ENCODE measurements at regions of chr17 and their contacts with region 1.

Region 1: DNA sequence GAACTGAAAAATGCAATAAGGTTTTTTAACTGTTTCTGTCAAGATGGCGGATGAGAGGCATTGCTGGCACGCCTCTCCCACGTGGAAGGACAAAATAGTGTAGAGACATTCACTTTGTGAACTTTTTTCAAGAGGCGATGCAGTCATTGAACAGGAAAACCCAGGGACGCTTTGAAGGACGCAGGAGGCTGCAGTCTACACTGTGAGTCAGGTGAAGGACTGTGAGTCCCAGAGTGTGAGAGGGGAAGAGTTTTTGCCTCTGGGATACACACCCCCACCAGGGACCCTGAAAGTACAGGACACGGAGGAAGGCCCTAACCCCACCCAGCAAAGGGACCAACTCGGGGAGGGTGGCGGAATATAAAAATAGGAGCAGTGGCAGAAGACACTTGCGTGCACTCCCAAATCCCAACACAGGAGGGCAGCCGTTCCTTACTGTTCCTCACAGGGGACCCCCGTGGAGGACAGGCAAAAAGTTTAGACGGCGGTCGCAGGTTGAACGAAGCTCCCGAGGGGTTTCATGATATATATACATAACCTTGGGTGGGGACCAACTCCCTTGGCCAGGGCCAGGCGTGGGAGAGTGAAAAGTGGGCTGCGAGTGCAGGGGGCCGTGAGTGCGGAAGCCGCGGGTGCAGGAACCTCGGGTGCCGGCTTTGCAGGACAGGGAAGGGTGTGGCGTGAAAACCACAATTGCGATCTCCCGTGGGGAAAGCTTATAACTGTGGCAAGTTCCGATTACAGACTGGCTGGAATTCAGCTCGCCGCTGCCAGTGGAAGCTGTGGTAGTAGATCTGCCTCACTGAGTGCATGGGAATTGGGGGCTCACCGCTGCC is 82.0 kb upstream of the ALOX12 start:
- DNase-seq: peak; percentile 47 to 77
- ATAC-seq: peak; percentile 66

Region 2: GRCh38 chr17:6853764-6854442 is 59.9 kb before region 1 on chr17:
- intact Hi-C with region 1: no loop called
- DNase-seq: no peak
- ATAC-seq: no peak

Region 3: DNA sequence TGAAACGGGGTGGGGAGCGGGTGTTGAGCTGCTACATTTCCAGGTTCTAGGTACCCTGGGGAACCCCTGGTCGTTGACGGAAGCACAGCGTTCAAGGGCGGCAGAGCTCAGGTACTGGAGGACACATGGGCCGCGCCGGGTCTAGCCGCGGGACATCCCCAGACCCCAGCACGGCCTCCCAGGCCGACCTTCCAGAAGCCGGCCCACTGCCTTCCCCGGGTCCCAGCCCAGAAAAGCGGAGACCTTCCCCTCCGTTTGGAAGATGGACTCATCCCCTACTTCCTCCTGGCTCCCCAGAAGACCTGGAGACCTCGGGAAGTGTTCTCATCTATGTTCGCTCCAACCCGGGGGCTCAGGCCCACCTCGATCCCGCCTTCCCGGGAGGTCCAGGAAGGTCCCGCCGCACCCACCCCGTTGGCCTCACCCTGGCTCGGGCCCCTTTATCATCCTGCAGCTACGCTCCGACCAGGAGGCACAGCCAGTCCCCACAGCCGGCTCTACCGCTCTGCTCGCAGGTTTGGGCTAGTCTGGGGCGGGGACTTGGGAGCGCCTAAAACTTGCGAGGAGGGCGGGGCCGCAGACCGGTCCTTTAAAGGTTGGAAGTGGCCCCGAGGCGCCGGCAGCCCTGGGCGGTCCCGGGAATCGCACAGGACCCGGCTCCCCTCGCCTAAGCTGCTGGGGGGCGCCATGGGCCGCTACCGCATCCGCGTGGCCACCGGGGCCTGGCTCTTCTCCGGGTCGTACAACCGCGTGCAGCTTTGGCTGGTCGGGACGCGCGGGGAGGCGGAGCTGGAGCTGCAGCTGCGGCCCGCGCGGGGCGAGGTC is 81.8 kb after region 1 on chr17 and contains the start of gene ALOX12:
- intact Hi-C with region 1: loop called (anchors 5 to 10 kb)
- DNase-seq: no peak
- ATAC-seq: peak; percentile 68
- total RNA-seq, gene ALOX12: not detected

Region 4: DNA sequence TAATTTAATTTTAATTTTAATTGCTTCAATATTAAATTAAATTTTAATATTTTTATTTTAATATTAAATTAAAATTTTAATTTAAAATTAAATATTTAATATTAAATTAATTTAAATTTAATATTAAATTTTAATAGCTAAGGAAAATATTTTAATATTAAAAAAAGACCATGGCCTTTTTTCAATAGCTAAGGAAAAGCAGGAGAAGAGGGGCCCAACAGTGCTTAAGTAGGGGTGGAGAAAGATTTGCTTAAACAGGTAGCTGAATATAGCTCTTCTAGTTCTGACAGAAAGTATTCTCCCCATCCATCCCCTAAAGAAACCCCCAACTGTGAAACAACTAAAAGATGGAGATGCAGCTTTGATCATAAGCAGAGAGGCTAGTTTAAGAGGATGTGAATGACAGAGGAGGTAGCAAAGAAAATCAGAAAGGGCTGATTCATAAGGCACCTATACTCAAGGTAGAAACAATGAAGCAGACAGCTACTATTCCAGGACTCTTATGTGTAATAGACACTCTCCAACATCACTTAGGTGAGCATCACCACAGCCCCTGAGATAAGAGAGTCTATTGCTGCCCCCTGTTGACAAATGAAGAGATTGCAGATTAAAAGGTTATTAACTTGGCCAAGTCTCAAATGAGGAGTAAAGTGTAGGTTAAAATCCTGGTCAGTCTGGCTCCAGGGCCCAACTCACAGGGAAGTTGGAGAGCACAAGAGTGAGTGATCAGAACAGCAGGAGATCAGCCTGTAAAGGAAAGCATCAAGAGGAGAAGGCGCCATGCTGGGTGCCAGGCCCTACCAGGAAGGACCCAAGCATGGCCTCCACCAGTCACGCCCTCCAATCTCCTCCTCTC is 90.8 kb after region 1 on chr17:
- intact Hi-C with region 1: loop called (anchors 5 to 10 kb)
- DNase-seq: peak in 1 of 2 donors; percentile 14
- ATAC-seq: peak; percentile 75